ENCODE measurements at regions of chr15 and their contacts with region 1.

Region 1: GRCh38 chr15:40893733-40894688 is at the start of gene VPS18:
- DNase-seq: peak; percentile 94
- H3K4me3 ChIP-seq: peak within 1 kb of the TSS; percentile 87
- H3K27ac ChIP-seq: peak within 1 kb of the TSS; percentile 96
- H3K27me3 ChIP-seq: no peaks in the 10 kb centered on the region
- CTCF ChIP-seq: peak; percentile 83
- polyA plus RNA-seq, gene VPS18: 18.7 and 25.7 TPM in 2 replicates

Region 2: GRCh38 chr15:40684381-40684780 is 209.6 kb before region 1 on chr15:
- CTCF ChIA-PET with region 1: interaction called, 11 read pairs
- POLR2A ChIA-PET with region 1: no interaction called
- DNase-seq: no peak
- H3K4me3 ChIP-seq: no peak overlapping the region
- H3K27ac ChIP-seq: no peak overlapping the region
- H3K27me3 ChIP-seq: no peaks in the 10 kb centered on the region
- CTCF ChIP-seq: no peak

Region 3: GRCh38 chr15:40702077-40702476 is 191.9 kb before region 1 on chr15:
- CTCF ChIA-PET with region 1: interaction called, 17 read pairs
- POLR2A ChIA-PET with region 1: interaction called, 4 read pairs
- DNase-seq: no peak
- H3K4me3 ChIP-seq: no peak overlapping the region
- H3K27ac ChIP-seq: no peak overlapping the region
- H3K27me3 ChIP-seq: no peaks in the 10 kb centered on the region
- CTCF ChIP-seq: peak; percentile 39

Region 4: GRCh38 chr15:40857601-40858341 is 36.2 kb before region 1 on chr15:
- CTCF ChIA-PET with region 1: interaction called, 171 read pairs
- POLR2A ChIA-PET with region 1: interaction called, 14 read pairs
- DNase-seq: peak; percentile 30
- H3K4me3 ChIP-seq: no peak overlapping the region
- H3K27ac ChIP-seq: no peak overlapping the region
- H3K27me3 ChIP-seq: peaks cover 20% of the 10 kb centered on the region
- CTCF ChIP-seq: peak; percentile 98

Region 5: GRCh38 chr15:40906091-40906990 is 12.3 kb after region 1 on chr15:
- CTCF ChIA-PET with region 1: interaction called, 34 read pairs
- POLR2A ChIA-PET with region 1: interaction called, 3 read pairs
- DNase-seq: peak; percentile 86
- H3K4me3 ChIP-seq: peak overlapping the region; percentile 48
- H3K27ac ChIP-seq: peak overlapping the region; percentile 94
- H3K27me3 ChIP-seq: no peaks in the 10 kb centered on the region
- CTCF ChIP-seq: peak; percentile 80